ENCODE measurements at regions of chr9 and their contacts with region 1.

Region 1: DNA sequence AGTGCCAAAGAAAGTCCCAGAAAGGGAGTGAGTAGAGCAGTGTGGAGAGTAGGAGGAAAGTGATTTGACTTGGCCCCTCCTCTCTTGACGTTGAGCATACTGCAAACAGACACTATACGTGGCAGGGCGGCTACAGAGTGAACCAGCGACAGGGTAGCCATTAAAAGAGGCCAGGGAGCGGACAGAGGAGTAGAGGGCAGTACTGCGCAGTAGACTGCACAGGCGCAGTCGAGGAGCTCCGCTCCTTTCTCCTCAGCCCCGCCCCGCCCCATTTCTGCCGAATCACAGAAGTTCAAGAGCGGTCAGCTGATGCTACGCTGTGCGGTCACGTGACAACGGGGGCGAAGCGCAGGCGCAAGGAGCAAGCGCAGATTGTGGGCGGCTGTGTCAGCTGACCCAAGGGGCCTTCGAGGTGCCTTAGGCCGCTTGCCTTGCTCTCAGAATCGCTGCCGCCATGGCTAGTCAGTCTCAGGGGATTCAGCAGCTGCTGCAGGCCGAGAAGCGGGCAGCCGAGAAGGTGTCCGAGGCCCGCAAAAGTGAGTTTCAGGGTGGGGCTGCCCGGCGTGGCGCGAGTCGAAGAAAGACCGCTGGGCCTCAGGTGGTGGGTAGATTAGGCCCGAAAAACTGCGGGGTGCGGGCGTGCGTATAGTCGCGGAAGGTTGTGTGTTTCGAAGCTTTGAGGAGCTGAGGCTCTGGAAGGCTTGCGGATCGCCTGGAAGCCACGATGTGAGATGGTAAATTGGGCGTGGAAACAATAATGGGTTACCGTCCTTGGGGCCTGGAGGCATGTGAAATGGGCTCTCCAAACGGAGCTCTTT is at the start of gene ATP6V1G1:
- DNase-seq: peak; percentile 96
- ATAC-seq: peak; percentile 93
- H3K4me3 Mint-ChIP-seq: peak within 1 kb of the TSS; percentile 99
- H3K27ac Mint-ChIP-seq: peak within 1 kb of the TSS; percentile 99
- H3K4me1 Mint-ChIP-seq: peaks cover 53% of the 10 kb centered on the region
- H3K27me3 Mint-ChIP-seq: no peaks in the 10 kb centered on the region
- CTCF ChIP-seq: no peak
- total RNA-seq, gene ATP6V1G1: 68.4 and 70.2 TPM in 2 replicates

Region 2: GRCh38 chr9:114385412-114386181 is 202.0 kb before region 1 on chr9:
- CTCF ChIA-PET with region 1: interaction called, 4 read pairs
- POLR2A ChIA-PET with region 1: interaction called, 17 read pairs
- intact Hi-C with region 1: no loop called
- DNase-seq: peak; percentile 71
- ATAC-seq: peak; percentile 77
- H3K4me3 Mint-ChIP-seq: peak overlapping the region; percentile 97
- H3K27ac Mint-ChIP-seq: peak overlapping the region; percentile 93
- H3K4me1 Mint-ChIP-seq: peaks cover 85% of the 10 kb centered on the region
- H3K27me3 Mint-ChIP-seq: no peaks in the 10 kb centered on the region
- CTCF ChIP-seq: no peak

Region 3: GRCh38 chr9:114434878-114435311 is 152.7 kb before region 1 on chr9:
- CTCF ChIA-PET with region 1: interaction called, 13 read pairs
- POLR2A ChIA-PET with region 1: no interaction called
- intact Hi-C with region 1: no loop called
- DNase-seq: no peak
- ATAC-seq: peak; percentile 81
- H3K4me3 Mint-ChIP-seq: no peak overlapping the region
- H3K27ac Mint-ChIP-seq: no peak overlapping the region
- H3K4me1 Mint-ChIP-seq: no peaks in the 10 kb centered on the region
- H3K27me3 Mint-ChIP-seq: no peaks in the 10 kb centered on the region
- CTCF ChIP-seq: no peak

Region 4: GRCh38 chr9:114505187-114506081 is 82.2 kb before region 1 on chr9 and contains the start of gene WHRN:
- CTCF ChIA-PET with region 1: interaction called, 6 read pairs
- POLR2A ChIA-PET with region 1: interaction called, 8 read pairs
- intact Hi-C with region 1: loop called (anchors 1 kb)
- DNase-seq: peak; percentile 84
- ATAC-seq: peak; percentile 85
- H3K4me3 Mint-ChIP-seq: peak within 1 kb of the TSS; percentile 86
- H3K27ac Mint-ChIP-seq: peak within 1 kb of the TSS; percentile 79
- H3K4me1 Mint-ChIP-seq: peaks cover 51% of the 10 kb centered on the region
- H3K27me3 Mint-ChIP-seq: peaks cover 8% of the 10 kb centered on the region
- CTCF ChIP-seq: no peak
- total RNA-seq, gene WHRN: 12.4 and 14.5 TPM in 2 replicates

Region 5: DNA sequence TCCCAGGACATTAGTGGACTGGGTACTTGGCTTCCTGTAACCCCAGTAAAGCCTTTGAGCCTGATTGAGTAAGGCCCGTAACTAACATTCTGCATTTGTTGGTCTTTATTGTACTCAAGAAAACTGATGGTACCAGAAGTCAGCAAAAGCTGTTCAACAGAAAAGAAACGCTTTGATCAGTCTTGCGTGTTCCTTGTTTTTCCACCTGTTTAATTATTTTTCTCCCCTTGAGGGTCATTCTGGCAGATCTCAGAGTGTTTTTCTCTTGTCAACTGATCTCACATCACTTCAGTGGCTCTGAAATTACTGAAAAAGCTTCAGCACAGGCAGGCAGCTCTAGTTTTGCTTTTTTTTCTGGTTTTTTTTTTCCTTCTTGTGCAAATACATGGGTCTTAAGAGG is 17.4 kb after region 1 on chr9:
- CTCF ChIA-PET with region 1: interaction called, 8 read pairs
- POLR2A ChIA-PET with region 1: interaction called, 161 read pairs
- intact Hi-C with region 1: loop called (anchors 1 kb)
- DNase-seq: no peak
- ATAC-seq: no peak
- H3K4me3 Mint-ChIP-seq: peak overlapping the region; percentile 9
- H3K27ac Mint-ChIP-seq: peak overlapping the region; percentile 63
- H3K4me1 Mint-ChIP-seq: peaks cover 61% of the 10 kb centered on the region
- H3K27me3 Mint-ChIP-seq: no peaks in the 10 kb centered on the region
- CTCF ChIP-seq: no peak

Region 6: GRCh38 chr9:114653556-114654159 is 66.1 kb after region 1 on chr9:
- CTCF ChIA-PET with region 1: interaction called, 136 read pairs
- POLR2A ChIA-PET with region 1: interaction called, 22 read pairs
- intact Hi-C with region 1: loop called (anchors 1 kb)
- DNase-seq: peak; percentile 55
- ATAC-seq: peak; percentile 98
- H3K4me3 Mint-ChIP-seq: no peak overlapping the region
- H3K27ac Mint-ChIP-seq: no peak overlapping the region
- H3K4me1 Mint-ChIP-seq: peaks cover 23% of the 10 kb centered on the region
- H3K27me3 Mint-ChIP-seq: no peaks in the 10 kb centered on the region
- CTCF ChIP-seq: peak; percentile 61

Region 7: GRCh38 chr9:115668506-115668905 is 1080.9 kb after region 1 on chr9:
- CTCF ChIA-PET with region 1: no interaction called
- POLR2A ChIA-PET with region 1: no interaction called
- intact Hi-C with region 1: no loop called
- DNase-seq: no peak
- ATAC-seq: no peak
- H3K4me3 Mint-ChIP-seq: no peak overlapping the region
- H3K27ac Mint-ChIP-seq: no peak overlapping the region
- H3K4me1 Mint-ChIP-seq: no peaks in the 10 kb centered on the region
- H3K27me3 Mint-ChIP-seq: no peaks in the 10 kb centered on the region
- CTCF ChIP-seq: no peak

Measured in activated B cell treated with CpG ODN at 0.5 μM for 24 hours (primary cell).